ENCODE measurements at regions of chr13 and their contacts with region 1.

Region 1: GRCh38 chr13:95536632-95537241 is 15.8 kb upstream of the CLDN10 start:
- DNase-seq: peak in 1 of 4 donors; percentile 56
- ATAC-seq: peak; percentile 23
- H3K4me3 ChIP-seq: no peak overlapping the region
- H3K27ac ChIP-seq: no peak overlapping the region
- H3K4me1 ChIP-seq: peaks cover 0 to 12% of the 10 kb centered on the region in 2 donors
- H3K27me3 ChIP-seq: no peaks in the 10 kb centered on the region
- CTCF ChIP-seq: peak in 1 of 2 donors; percentile 22

Region 2: DNA sequence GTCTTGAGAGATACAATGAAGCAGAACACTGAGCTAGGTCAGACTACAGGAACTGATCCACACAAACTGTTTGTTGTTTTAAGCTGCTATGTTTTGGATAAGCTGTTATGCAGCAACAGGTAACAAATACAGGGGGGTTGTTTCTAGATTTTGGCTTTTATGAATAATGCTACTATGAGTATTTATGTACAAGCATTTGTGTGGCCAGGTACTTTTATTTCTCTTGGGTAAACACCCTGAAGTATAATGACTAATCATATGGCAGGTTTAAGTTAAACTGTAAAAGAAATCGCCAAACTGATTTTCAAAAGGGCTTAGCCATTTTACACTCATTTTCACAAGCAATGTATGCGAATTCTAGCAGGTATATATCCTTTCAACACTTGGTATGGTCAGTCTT is 306.2 kb after region 1 on chr13:
- intact Hi-C with region 1: loop called in 1 of 2 experiments (anchors 10 kb)
- DNase-seq: no peak
- ATAC-seq: no peak
- H3K4me3 ChIP-seq: no peak overlapping the region
- H3K27ac ChIP-seq: no peak overlapping the region
- H3K4me1 ChIP-seq: no peaks in the 10 kb centered on the region
- H3K27me3 ChIP-seq: no peaks in the 10 kb centered on the region
- CTCF ChIP-seq: no peak